ENCODE measurements at regions of chr14 and their contacts with region 1.

Region 1: DNA sequence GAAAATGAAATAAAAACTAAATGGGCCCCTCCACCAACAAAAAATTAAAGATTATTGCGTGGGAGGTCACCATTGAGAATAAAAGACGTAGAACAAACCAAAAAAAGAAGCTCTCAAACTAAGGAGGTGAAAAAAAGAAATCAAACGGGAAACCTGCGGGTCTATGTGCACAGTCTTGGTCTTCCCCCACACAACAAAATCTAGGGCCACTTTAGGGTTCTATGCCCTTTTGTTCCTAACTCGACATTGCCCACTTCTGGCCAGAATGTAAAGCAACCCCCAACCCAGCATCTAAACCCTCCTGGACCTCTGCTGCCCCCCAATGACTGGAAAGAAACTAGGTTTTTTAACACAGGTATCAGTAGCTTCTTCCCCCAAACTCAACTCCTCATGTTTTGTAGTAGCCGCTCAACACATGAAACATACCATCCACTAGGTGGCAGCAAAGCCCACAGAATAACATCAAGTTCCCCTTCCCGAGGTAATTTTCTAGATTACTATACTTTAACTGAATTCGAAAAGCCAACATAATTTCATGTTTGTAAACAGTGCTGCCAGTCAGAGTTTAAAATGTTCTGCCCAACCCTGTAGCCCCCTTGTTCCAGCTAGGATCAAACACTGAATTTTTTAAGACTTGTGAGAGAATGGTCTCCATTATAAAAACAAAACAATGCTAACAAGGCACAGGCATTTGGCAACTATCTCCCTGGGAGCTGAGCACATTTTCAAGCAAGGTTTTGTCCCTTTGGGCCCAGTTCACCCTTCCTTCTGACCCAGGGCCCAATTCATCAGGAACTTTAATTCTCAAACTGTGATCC is 18.7 kb downstream of the DAD1 start:
- DNase-seq: peak; percentile 91
- H3K4me3 Mint-ChIP-seq: peak overlapping the region; percentile 82
- H3K27ac Mint-ChIP-seq: peak overlapping the region; percentile 95
- H3K4me1 Mint-ChIP-seq: peaks cover 70% of the 10 kb centered on the region
- H3K27me3 Mint-ChIP-seq: no peaks in the 10 kb centered on the region

Region 2: GRCh38 chr14:21852061-21852664 is 718.2 kb before region 1 on chr14:
- CTCF ChIA-PET with region 1: interaction called, 10 read pairs
- POLR2A ChIA-PET with region 1: interaction called, 11 read pairs
- DNase-seq: peak; percentile 78
- H3K4me3 Mint-ChIP-seq: peak overlapping the region; percentile 65
- H3K27ac Mint-ChIP-seq: peak overlapping the region; percentile 82
- H3K4me1 Mint-ChIP-seq: peaks cover 12% of the 10 kb centered on the region
- H3K27me3 Mint-ChIP-seq: peaks cover 23% of the 10 kb centered on the region

Region 3: DNA sequence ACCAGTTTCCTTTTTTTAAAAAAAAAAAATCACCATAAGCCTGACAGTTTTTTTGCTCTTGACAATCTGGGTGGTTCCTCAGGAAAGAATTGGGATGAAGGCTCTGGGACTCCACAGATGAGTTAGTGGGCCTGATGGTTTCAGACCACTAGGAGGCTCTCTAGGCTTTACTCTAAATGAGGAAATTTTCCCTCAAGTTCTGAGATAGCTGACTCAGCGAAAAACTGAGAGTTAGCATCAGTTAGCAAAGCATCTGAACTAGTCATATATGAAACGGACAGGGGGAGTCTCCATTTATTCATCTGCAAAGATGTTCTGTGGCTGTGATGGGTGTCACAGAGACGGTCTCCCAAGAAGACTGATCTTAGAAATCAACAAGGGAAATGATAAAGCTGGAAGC is 582.4 kb before region 1 on chr14:
- CTCF ChIA-PET with region 1: interaction called, 8 read pairs
- POLR2A ChIA-PET with region 1: interaction called, 10 read pairs
- DNase-seq: no peak
- H3K4me3 Mint-ChIP-seq: no peak overlapping the region
- H3K27ac Mint-ChIP-seq: peak overlapping the region; percentile 72
- H3K4me1 Mint-ChIP-seq: peaks cover 24% of the 10 kb centered on the region
- H3K27me3 Mint-ChIP-seq: peaks cover 10% of the 10 kb centered on the region

Region 4: GRCh38 chr14:22147704-22148103 is 422.6 kb before region 1 on chr14:
- CTCF ChIA-PET with region 1: no interaction called
- POLR2A ChIA-PET with region 1: no interaction called
- DNase-seq: no peak
- H3K4me3 Mint-ChIP-seq: peak overlapping the region; percentile 47
- H3K27ac Mint-ChIP-seq: no peak overlapping the region
- H3K4me1 Mint-ChIP-seq: peaks cover 6% of the 10 kb centered on the region
- H3K27me3 Mint-ChIP-seq: peaks cover 9% of the 10 kb centered on the region

Region 5: DNA sequence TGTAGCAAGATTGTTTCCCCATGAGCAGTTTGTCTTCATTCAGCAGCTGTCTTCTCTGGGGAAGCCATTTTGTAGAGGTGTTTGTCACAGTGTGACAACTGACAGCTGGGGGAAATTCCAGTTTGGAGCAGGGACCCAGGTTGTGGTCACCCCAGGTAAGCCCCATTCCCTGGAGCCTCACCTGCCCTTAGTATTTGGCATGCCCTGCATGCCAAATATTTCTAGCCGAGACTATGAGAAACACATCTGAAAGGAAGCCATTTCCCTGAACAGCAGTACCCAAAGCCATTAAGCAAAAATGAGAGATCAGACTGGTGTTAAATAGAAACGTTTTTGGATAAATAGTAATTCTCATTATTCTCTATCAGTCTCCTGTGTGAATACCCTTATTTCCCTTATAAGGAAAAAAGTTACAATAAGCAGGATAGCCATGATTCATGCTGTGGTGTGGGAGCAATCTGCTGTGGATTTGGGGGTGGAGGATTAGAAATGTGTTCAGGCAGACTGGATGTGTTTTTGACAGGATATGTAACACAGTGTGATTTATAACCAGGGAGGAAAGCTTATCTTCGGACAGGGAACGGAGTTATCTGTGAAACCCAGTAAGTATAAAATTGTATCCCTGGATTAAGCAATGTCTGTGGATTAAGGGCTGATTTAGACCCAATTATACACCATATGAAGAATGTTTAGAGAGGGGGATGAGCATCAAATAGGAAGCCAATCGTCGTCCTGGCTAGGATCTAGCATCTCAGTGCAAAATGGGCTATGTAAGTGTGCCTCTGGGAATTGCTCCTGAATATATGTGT is 50.3 kb before region 1 on chr14:
- CTCF ChIA-PET with region 1: interaction called, 8 read pairs
- POLR2A ChIA-PET with region 1: interaction called, 1,110 read pairs
- DNase-seq: no peak
- H3K4me3 Mint-ChIP-seq: peak overlapping the region; percentile 78
- H3K27ac Mint-ChIP-seq: peak overlapping the region; percentile 91
- H3K4me1 Mint-ChIP-seq: peaks cover 96% of the 10 kb centered on the region
- H3K27me3 Mint-ChIP-seq: no peaks in the 10 kb centered on the region

Region 6: GRCh38 chr14:22589096-22589839 is 18.9 kb after region 1 on chr14 and contains the start of gene DAD1:
- CTCF ChIA-PET with region 1: interaction called, 162 read pairs
- POLR2A ChIA-PET with region 1: interaction called, 103 read pairs
- DNase-seq: peak; percentile 100
- H3K4me3 Mint-ChIP-seq: peak within 1 kb of the TSS; percentile 93
- H3K27ac Mint-ChIP-seq: peak within 1 kb of the TSS; percentile 98
- H3K4me1 Mint-ChIP-seq: peaks cover 55% of the 10 kb centered on the region
- H3K27me3 Mint-ChIP-seq: peaks cover 6% of the 10 kb centered on the region
- total RNA-seq, gene DAD1: 160 to 167 TPM

Region 7: DNA sequence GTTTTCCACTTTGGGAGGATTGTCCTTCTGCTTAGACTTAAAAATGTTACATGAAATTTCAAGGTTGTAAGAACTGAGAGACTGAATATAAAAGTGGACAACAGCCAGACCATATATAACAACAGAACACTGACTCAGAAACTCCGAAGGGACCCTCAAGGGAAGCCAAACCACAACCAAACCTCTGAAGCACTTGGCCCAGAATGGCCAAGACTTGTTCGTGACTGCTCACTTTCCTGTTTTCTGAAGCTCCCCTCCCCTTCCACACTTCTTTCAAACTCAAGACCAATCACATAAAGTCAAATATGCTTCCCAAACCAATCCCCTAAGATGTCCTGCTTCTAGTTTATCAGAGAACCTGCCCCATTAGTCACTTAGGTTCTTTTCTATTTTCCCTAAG is 60.1 kb after region 1 on chr14:
- CTCF ChIA-PET with region 1: no interaction called
- POLR2A ChIA-PET with region 1: no interaction called
- DNase-seq: no peak
- H3K4me3 Mint-ChIP-seq: no peak overlapping the region
- H3K27ac Mint-ChIP-seq: no peak overlapping the region
- H3K4me1 Mint-ChIP-seq: no peaks in the 10 kb centered on the region
- H3K27me3 Mint-ChIP-seq: peaks cover 18% of the 10 kb centered on the region

Region 8: GRCh38 chr14:22829661-22830442 is 259.5 kb after region 1 on chr14 and contains the start of gene MRPL52:
- CTCF ChIA-PET with region 1: interaction called, 28 read pairs
- POLR2A ChIA-PET with region 1: interaction called, 9 read pairs
- DNase-seq: peak; percentile 93
- H3K4me3 Mint-ChIP-seq: peak within 1 kb of the TSS; percentile 87
- H3K27ac Mint-ChIP-seq: peak within 1 kb of the TSS; percentile 90
- H3K4me1 Mint-ChIP-seq: peaks cover 33% of the 10 kb centered on the region
- H3K27me3 Mint-ChIP-seq: no peaks in the 10 kb centered on the region
- total RNA-seq, gene MRPL52: 108 to 119 TPM

Region 9: DNA sequence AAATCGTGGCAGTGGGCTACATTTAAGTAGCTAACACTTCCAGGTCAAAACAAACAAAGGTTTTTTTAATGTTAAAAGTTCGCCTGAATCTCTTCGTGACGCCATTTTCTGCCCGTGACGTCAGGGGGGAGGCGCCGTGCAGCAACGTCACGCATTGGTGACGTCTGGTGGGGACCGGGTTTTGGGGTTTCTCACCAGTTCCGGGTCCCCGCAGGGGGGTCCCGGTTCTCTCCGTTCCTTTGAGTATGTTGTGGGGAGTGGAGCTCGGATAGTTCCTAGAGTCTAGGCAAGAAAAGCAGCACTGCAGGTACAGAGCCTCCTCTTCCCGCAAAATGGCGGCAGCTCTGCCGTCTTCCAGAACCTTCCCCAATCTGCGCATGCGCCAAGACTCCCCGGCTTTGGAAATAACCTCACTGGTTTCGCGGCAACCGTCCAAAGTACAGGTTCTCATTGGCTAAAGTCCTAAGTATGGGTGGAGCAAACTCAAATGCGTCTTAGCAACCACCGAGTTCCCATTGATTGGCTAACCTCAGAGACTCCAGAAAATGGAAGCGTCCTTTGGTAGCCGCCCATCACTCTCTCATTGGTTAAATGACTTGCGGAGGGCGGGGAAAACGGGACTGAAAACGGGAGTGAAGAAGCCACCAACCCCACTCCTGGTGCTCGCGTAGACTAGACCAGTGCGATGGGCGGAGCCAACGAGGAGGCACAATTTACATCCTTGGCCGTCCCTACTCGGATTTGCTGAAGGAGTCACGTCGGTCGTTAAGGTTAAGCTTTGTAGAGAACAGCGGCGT is 348.7 kb after region 1 on chr14 and contains the start of gene RBM23:
- CTCF ChIA-PET with region 1: interaction called, 15 read pairs
- POLR2A ChIA-PET with region 1: interaction called, 6 read pairs
- DNase-seq: peak; percentile 100
- H3K4me3 Mint-ChIP-seq: peak within 1 kb of the TSS; percentile 90
- H3K27ac Mint-ChIP-seq: peak within 1 kb of the TSS; percentile 98
- H3K4me1 Mint-ChIP-seq: peaks cover 42% of the 10 kb centered on the region
- H3K27me3 Mint-ChIP-seq: no peaks in the 10 kb centered on the region
- total RNA-seq, gene RBM23: 71.8 to 73.5 TPM

Measured in activated CD4-positive, alpha-beta memory T cell treated with anti-CD3 and anti-CD28 coated beads, Interleukin-2, amount 10 ng/mL, durations not matched to agents 7 days and 5 days (primary cell).